Activated T-helper 2 cell treated with anti-CD3 and anti-CD28 coated beads, Interferon-gamma antibody, Interleukin-2, Interleukin-4, amounts not matched to agents 10 μg/mL and 5 μg/mL and 100 μg/mL, durations not matched to agents 14 hours and 24 hours and 36 hours (primary cell): ENCODE measurements at regions of chr20 and their contacts with region 1.

Region 1: GRCh38 chr20:32945710-32946221 is 58.5 kb downstream of the SUN5 start:
- DNase-seq: no peak
- H3K4me3 Mint-ChIP-seq: no peak overlapping the region
- H3K27ac Mint-ChIP-seq: peak overlapping the region; percentile 51
- H3K4me1 Mint-ChIP-seq: peaks cover 34% of the 10 kb centered on the region
- H3K27me3 Mint-ChIP-seq: no peaks in the 10 kb centered on the region

Region 2: DNA sequence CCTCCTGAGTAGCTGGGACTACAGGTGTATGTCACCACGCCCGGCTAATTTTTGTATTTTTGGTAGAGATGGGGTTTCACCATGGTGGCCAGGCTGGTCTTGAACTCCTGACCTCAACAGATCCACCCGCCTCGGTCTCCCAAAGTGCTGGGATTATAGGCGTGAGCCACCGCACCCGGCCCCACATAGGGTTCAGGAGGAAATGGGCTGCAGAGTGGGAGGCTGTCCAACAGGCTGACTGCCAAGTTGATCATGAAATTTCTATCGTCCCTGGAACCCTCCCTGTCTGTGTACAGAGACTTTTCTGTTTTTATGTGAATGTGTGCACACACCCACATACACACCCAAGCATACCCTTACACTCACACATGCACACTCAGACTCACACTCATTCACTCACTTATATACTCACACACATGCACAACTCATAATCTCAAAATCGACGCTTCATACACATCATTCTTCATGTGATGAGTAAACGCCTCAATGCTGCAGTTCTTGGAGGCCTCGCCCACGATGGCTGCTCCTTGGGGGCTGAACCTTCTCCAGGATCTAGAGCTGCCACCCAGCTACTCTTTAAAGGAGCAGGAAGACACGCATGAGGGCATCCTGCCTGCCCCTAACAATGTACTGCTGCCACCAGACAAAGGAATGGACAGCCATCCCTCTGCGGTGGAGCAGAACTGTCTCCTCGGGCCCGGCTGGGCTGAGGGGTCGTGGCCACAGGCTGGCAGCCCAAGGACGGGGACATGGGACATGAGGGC is 22.9 kb after region 1 on chr20:
- intact Hi-C with region 1: loop called (anchors 2 kb)
- DNase-seq: peak; percentile 8
- H3K4me3 Mint-ChIP-seq: no peak overlapping the region
- H3K27ac Mint-ChIP-seq: no peak overlapping the region
- H3K4me1 Mint-ChIP-seq: peaks cover 63% of the 10 kb centered on the region
- H3K27me3 Mint-ChIP-seq: no peaks in the 10 kb centered on the region

Region 3: GRCh38 chr20:33026072-33026778 is 80.5 kb after region 1 on chr20:
- intact Hi-C with region 1: no loop called
- DNase-seq: no peak
- H3K4me3 Mint-ChIP-seq: no peak overlapping the region
- H3K27ac Mint-ChIP-seq: no peak overlapping the region
- H3K4me1 Mint-ChIP-seq: no peaks in the 10 kb centered on the region
- H3K27me3 Mint-ChIP-seq: no peaks in the 10 kb centered on the region